HAP-1 (cell line): ENCODE measurements at regions of chr4 and their contacts with region 1.

Region 1: GRCh38 chr4:37561803-37562207 is 124.4 kb downstream of the RELL1 start:
- DNase-seq: peak; percentile 8 to 37
- H3K4me3 ChIP-seq: no peak overlapping the region
- H3K4me1 ChIP-seq: peaks cover 3% of the 10 kb centered on the region
- H3K27me3 ChIP-seq: no peaks in the 10 kb centered on the region

Region 2: DNA sequence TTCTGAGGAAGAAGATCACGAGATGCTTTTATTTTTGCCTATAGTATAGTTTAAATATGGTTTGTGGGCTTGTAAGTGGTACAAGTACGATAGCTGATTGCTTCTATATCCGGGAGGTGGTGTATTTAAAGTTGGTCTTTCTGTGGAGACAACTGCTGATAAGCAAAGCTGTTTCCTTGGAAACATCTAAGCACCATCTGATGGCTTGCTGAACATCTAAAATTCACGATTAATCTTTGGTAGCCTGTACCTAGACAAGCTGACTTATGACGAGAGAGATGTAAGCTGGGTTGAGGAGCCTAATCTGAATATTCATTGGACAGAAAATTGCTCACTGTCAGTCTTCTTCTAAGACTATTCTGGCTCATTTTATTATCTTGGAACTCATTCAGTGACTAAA is 391.8 kb before region 1 on chr4:
- in situ Hi-C with region 1: no loop called
- DNase-seq: no peak
- H3K4me3 ChIP-seq: no peak overlapping the region
- H3K4me1 ChIP-seq: no peaks in the 10 kb centered on the region
- H3K27me3 ChIP-seq: no peaks in the 10 kb centered on the region

Region 3: DNA sequence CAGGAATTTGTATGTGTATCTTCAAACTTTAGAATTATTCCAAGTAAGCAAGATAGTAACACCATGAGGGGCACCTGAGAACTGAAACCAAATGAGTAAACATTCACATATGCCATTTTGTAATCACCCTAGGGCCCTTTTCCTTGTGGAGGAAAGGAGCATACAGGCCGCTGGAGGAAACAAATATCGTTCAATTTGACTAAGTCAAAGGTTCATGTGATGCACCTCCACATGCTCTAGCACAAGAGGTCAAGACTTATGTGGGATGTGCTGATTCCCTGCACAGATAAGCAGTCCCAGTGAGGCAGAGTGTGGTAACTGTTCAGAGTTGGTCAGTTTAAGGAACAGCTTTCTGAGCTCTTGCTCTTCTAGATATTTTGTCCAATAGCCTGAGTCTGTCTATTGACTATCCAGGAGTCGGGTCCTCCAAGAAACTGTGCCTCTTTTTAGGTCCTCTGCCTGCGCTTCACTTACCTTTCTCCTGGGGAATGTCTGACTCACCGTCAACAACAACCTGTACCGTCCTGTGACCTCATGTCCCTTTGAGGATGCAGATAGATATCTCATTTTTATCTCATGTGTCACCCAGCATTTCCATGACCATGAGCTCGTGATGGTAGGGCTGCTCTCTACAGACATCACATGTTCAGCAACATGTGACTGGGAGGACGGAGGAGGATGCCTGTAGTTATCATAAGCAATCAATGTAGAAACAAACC is 120.4 kb before region 1 on chr4:
- in situ Hi-C with region 1: loop called (anchors 5 kb)
- DNase-seq: no peak
- H3K4me3 ChIP-seq: no peak overlapping the region
- H3K4me1 ChIP-seq: no peaks in the 10 kb centered on the region
- H3K27me3 ChIP-seq: no peaks in the 10 kb centered on the region